ENCODE measurements at regions of chr1 and their contacts with region 1.

Region 1: GRCh38 chr1:206967096-206967849 is 3.0 kb downstream of the FCAMR start:
- DNase-seq: no peak
- ATAC-seq: no peak
- H3K4me3 ChIP-seq: no peak overlapping the region
- H3K27ac ChIP-seq: no peak overlapping the region
- H3K4me1 ChIP-seq: peaks cover 12% of the 10 kb centered on the region
- H3K27me3 ChIP-seq: peaks cover 0 to 20% of the 10 kb centered on the region in 2 experiments; a peak in 3 of 5 replicates
- CTCF ChIP-seq: no peak
- EP300 ChIP-seq: no peak
- POLR2A ChIP-seq: no peak
- RAD21 ChIP-seq: no peak

Region 2: DNA sequence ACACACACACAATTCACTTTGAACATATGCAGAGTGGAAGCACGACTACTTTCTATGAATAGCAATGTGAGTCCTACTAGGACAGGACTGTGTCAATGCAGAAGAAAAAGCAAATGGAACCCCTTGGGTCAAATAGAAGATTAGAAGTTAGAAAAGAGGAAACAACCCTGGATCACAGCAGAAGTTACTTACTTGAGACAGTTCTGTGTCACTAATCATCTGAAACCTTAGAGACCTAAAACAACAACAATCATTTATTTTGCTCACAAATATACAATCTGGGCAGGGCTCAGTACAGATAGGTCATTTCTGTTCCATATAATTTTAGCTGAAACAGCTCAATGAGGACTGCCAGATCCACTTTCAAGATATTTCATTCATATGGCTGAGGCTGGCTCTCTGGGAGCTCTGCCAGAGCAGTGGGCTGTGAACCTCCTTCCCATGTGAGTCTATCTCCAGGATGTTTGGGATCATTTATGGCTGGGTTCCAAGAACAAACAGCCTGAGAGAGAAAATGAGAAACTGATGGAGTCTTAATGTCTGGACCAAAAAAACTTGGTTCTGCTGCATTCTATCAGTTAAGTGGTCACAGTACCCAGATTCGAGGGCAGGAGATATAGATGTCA is 152.4 kb before region 1 on chr1:
- CTCF ChIA-PET with region 1: no interaction called
- POLR2A ChIA-PET with region 1: no interaction called
- in situ Hi-C with region 1: no loop called
- intact Hi-C with region 1: no loop called
- DNase-seq: no peak
- ATAC-seq: no peak
- H3K4me3 ChIP-seq: no peak overlapping the region
- H3K27ac ChIP-seq: no peak overlapping the region
- H3K4me1 ChIP-seq: no peaks in the 10 kb centered on the region
- H3K27me3 ChIP-seq: 0 out of 5 replicates have a peak, but pooled peaks cover 0 to 2% of the 10 kb centered on the region in 2 experiments
- CTCF ChIP-seq: no peak
- EP300 ChIP-seq: no peak
- POLR2A ChIP-seq: no peak
- RAD21 ChIP-seq: no peak

Region 3: DNA sequence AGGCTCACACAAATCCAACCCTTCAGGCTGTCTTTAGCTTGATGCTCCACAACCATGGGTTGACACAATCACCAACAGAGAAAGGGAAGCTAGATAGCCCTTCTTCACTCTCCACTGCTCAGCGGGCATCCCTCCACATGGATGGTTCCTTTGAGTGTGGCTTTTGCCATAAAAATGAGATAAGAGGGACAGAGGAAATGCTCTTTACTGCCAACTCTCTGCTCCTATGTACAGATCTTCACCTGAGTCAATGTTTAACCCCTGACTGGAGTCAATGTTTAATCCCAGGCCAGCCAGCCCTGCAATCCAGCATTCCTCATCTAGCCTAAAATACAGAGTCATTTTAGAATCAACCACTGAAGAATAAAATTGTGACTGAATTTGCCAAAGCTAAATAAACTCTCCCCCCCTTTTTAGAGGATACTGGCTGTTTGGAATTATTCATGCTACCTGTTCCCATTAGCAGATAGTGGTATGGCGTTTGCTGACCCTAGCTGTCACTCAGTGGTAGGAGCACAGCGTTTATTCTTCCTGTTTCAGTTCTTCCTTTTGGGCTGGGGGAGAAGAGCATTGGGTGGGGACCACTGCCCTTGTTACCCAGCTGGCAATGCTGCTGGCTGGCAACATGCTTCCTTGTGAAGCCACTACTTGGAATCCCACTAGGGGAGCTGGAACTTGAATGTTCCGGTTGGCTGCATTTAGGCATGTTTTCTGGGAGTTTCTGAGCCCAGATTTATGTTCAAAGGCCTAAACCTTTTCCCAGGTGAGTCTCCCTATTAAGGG is 15.8 kb before region 1 on chr1:
- CTCF ChIA-PET with region 1: no interaction called
- POLR2A ChIA-PET with region 1: no interaction called
- in situ Hi-C with region 1: no loop called
- intact Hi-C with region 1: loop called (anchors 2 kb)
- DNase-seq: peak; percentile 67
- ATAC-seq: peak; percentile 93
- H3K4me3 ChIP-seq: peak overlapping the region; percentile 42 to 66 (median 58)
- H3K27ac ChIP-seq: peak overlapping the region; percentile 43
- H3K4me1 ChIP-seq: peaks cover 83% of the 10 kb centered on the region
- H3K27me3 ChIP-seq: no peaks in the 10 kb centered on the region
- CTCF ChIP-seq: no peak
- EP300 ChIP-seq: no peak
- POLR2A ChIP-seq: peak in 1 of 2 experiments; percentile 32; a peak in 1 of 4 replicates
- RAD21 ChIP-seq: no peak

Measured in HepG2 (cell line).